ENCODE measurements at regions of chr1 and their contacts with region 1.

Region 1: DNA sequence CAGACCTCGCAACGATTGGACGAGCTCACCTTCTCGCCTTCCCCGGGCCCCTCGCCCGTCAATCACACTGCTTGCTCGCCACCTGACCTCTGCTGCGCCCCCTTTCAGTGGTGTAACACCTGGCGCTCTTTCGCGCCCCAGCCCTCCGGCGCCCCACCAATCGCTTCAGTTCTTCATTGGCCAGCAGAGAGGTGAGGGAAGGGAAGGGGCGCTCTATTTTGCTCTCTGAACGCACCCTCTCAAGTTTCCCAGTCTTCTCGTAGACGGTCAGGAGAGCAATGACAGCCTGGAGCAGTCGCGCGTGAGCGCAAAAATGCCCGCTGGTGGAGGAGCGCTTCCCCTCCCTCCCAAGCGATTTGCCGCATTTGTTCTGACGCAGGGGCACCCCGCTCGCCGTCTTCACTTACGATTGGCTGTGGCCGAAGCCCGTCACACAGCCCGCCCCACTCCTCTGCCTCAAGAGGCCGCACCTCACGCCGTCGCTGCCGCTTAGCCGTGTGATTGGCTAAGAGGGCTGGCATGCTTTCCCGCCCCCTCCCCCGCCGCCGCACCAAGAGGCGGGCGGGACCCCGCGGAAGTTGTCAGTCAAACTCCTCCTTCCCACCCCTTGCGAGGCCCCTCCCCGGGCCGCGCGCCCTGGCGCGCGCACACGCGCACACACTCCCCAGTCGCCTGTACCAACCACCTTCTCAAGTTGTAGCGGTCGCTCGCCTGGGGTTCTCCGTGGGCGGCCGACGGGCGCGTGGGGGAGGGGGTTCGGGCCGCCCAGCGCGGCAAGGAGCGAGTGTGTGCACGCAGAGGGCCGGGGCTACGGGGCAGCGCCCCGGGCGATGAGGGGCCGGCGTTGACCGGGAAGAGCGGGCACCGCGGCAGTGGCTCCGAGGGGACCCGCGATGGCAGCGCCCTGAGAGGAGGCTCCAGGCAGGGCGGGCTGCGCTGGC is at the start of gene PPP2R5A:
- DNase-seq: peak; percentile 99
- H3K4me3 Mint-ChIP-seq: peak within 1 kb of the TSS; percentile 96
- H3K27ac Mint-ChIP-seq: peak within 1 kb of the TSS; percentile 91
- H3K4me1 Mint-ChIP-seq: peaks cover 32% of the 10 kb centered on the region
- H3K27me3 Mint-ChIP-seq: no peaks in the 10 kb centered on the region
- total RNA-seq, gene PPP2R5A: 30.6 to 31.4 TPM

Region 2: DNA sequence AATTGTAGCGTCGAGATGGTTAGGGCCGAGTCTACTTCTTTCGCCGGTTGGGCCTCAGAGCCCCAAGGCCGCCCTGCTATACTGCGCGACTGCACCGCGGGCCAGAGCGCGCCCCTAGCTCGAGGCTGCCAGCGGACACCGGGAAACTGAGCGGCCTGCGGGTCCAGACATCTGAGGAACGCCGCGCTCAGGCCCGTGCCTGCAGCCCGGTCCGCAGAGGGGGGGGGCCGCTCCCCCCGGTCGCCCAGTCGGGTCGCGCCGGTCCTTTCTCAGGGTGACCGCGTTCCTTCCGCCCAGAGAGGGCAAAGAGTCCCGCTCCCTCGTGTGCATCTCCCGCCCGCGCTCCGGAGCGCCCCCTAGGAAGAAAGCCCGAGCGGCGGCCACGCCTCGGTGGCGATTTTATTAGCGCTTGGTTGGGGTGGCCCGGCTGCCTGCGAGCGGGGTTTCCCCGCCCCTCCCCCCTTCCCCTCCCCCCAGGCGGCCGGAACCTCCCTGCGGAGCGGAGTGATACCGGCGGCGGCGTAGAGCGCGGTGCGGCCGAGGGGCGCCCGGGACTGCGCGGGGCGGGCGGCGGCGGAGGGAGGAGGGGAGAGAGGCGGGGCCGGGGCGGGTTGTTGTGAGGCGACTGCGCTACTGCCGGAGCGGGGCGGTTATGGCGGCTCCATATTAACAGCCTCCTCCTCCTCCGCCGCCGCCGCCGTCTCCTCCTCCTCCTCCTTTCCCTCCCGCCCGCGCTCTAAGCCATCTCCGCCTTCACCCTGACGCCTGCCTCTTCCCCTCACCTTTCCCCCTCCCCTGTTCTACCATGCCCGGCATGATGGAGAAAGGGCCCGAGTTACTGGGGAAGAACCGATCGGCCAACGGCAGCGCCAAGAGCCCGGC is 1026.0 kb before region 1 on chr1 and contains the start of gene RCOR3:
- CTCF ChIA-PET with region 1: no interaction called
- intact Hi-C with region 1: loop called (anchors 1 kb)
- DNase-seq: peak; percentile 93
- H3K4me3 Mint-ChIP-seq: peak within 1 kb of the TSS; percentile 90
- H3K27ac Mint-ChIP-seq: peak within 1 kb of the TSS; percentile 96
- H3K4me1 Mint-ChIP-seq: peaks cover 16% of the 10 kb centered on the region
- H3K27me3 Mint-ChIP-seq: no peaks in the 10 kb centered on the region
- total RNA-seq, gene RCOR3: 28.9 to 30.8 TPM

Region 3: GRCh38 chr1:211830330-211831142 is 454.5 kb before region 1 on chr1 and contains the start of gene LPGAT1:
- CTCF ChIA-PET with region 1: no interaction called
- intact Hi-C with region 1: loop called (anchors 2 kb)
- DNase-seq: peak; percentile 75
- H3K4me3 Mint-ChIP-seq: peak within 1 kb of the TSS; percentile 82
- H3K27ac Mint-ChIP-seq: peak within 1 kb of the TSS; percentile 75
- H3K4me1 Mint-ChIP-seq: peaks cover 47% of the 10 kb centered on the region
- H3K27me3 Mint-ChIP-seq: no peaks in the 10 kb centered on the region
- total RNA-seq, gene LPGAT1: 18.6 to 21.7 TPM

Region 4: DNA sequence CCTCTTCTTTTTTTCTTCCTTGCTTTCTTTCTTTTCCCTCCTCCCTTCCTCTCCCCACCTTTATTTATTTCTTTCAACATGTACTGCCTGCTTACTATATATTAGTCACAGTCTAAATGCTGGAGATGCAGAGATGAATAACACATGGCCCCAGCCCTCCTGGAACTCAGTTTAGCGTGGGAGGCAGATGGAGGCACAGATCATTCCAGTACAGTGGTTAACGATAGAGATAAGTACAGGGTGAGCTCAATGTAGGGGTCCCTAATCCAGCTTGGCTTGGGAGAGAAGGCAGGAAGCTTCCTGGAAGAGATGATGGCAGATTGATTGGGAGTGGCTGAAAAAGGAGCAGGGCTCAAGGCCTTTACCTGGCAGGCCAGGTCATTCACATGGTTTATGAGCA is 55.4 kb before region 1 on chr1:
- CTCF ChIA-PET with region 1: no interaction called
- intact Hi-C with region 1: loop called (anchors 1 kb)
- DNase-seq: no peak
- H3K4me3 Mint-ChIP-seq: no peak overlapping the region
- H3K27ac Mint-ChIP-seq: no peak overlapping the region
- H3K4me1 Mint-ChIP-seq: peaks cover 23% of the 10 kb centered on the region
- H3K27me3 Mint-ChIP-seq: no peaks in the 10 kb centered on the region

Region 5: DNA sequence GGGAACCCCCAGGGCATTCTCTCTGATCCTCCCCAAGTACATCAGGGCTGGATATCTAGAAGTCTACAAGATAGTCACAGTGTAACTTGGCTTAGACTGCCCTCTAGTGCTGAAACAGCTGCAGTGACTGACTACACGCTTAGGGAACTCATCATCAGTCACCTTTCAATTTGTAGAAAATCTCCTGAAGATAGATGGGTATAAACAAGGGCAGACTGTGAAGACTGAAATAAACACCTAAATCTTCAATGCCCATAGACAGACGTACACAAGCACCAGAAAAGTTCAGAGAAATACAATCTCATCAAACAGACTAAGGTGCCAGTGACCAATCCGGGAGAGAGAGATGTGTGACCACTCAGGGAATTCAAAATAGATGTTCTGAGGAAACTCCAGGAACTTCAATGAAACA is 83.1 kb after region 1 on chr1:
- CTCF ChIA-PET with region 1: interaction called, 3 read pairs
- intact Hi-C with region 1: loop called (anchors 2 kb)
- DNase-seq: peak; percentile 77
- H3K4me3 Mint-ChIP-seq: no peak overlapping the region
- H3K27ac Mint-ChIP-seq: no peak overlapping the region
- H3K4me1 Mint-ChIP-seq: no peaks in the 10 kb centered on the region
- H3K27me3 Mint-ChIP-seq: no peaks in the 10 kb centered on the region

Region 6: DNA sequence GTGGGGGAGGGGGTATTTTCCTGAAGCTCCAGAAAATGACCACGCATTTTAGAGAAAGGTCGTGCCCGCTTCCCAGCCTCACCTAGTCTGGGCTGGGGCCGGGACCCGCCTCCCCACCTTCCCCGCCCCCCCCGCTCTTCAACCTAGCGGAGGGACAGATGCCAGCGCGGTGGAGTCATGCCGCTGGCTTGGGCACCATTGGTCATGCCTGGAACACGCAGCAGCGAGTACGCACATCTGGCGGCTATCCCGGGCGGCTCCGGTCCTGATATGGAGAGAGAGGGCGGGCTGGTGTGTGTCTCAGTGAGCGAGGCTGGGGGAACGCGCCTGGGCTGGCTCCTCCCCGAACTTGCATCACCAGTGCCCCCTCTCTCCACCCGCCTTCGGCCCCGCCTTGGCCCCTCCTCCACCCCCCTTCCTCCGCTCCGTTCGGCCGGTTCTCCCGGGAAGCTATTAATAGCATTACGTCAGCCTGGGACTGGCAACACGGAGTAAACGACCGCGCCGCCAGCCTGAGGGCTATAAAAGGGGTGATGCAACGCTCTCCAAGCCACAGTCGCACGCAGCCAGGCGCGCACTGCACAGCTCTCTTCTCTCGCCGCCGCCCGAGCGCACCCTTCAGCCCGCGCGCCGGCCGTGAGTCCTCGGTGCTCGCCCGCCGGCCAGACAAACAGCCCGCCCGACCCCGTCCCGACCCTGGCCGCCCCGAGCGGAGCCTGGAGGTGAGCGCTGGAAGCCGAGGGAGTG is 323.4 kb after region 1 on chr1 and contains the start of gene ATF3:
- CTCF ChIA-PET with region 1: no interaction called
- intact Hi-C with region 1: loop called (anchors 1 kb)
- DNase-seq: peak; percentile 98
- H3K4me3 Mint-ChIP-seq: peak within 1 kb of the TSS; percentile 90
- H3K27ac Mint-ChIP-seq: peak within 1 kb of the TSS; percentile 92
- H3K4me1 Mint-ChIP-seq: peaks cover 52% of the 10 kb centered on the region
- H3K27me3 Mint-ChIP-seq: peaks cover 43% of the 10 kb centered on the region
- total RNA-seq, gene ATF3: 67.4 to 67.7 TPM

Measured in activated naive CD4-positive, alpha-beta T cell treated with anti-CD3 and anti-CD28 coated beads for 36 hours (primary cell).